Activated CD4-positive, alpha-beta memory T cell treated with anti-CD3 and anti-CD28 coated beads for 36 hours (primary cell): ENCODE measurements at regions of chr3 and their contacts with region 1.

Region 1: GRCh38 chr3:197327701-197328100 is 29.3 kb upstream of the DLG1 start:
- DNase-seq: no peak
- H3K4me3 Mint-ChIP-seq: no peak overlapping the region
- H3K27ac Mint-ChIP-seq: no peak overlapping the region
- H3K4me1 Mint-ChIP-seq: peaks cover 9% of the 10 kb centered on the region
- H3K27me3 Mint-ChIP-seq: peaks cover 28% of the 10 kb centered on the region

Region 2: GRCh38 chr3:197292083-197292646 is 35.5 kb before region 1 on chr3:
- CTCF ChIA-PET with region 1: no interaction called
- POLR2A ChIA-PET with region 1: no interaction called
- intact Hi-C with region 1: loop called (anchors 5 kb)
- DNase-seq: peak; percentile 35
- H3K4me3 Mint-ChIP-seq: no peak overlapping the region
- H3K27ac Mint-ChIP-seq: no peak overlapping the region
- H3K4me1 Mint-ChIP-seq: peaks cover 61% of the 10 kb centered on the region
- H3K27me3 Mint-ChIP-seq: no peaks in the 10 kb centered on the region

Region 3: GRCh38 chr3:197305854-197306253 is 21.8 kb before region 1 on chr3:
- CTCF ChIA-PET with region 1: interaction called, 4 read pairs
- POLR2A ChIA-PET with region 1: no interaction called
- intact Hi-C with region 1: loop called (anchors 1 kb)
- DNase-seq: peak; percentile 29
- H3K4me3 Mint-ChIP-seq: no peak overlapping the region
- H3K27ac Mint-ChIP-seq: no peak overlapping the region
- H3K4me1 Mint-ChIP-seq: peaks cover 28% of the 10 kb centered on the region
- H3K27me3 Mint-ChIP-seq: peaks cover 21% of the 10 kb centered on the region

Region 4: DNA sequence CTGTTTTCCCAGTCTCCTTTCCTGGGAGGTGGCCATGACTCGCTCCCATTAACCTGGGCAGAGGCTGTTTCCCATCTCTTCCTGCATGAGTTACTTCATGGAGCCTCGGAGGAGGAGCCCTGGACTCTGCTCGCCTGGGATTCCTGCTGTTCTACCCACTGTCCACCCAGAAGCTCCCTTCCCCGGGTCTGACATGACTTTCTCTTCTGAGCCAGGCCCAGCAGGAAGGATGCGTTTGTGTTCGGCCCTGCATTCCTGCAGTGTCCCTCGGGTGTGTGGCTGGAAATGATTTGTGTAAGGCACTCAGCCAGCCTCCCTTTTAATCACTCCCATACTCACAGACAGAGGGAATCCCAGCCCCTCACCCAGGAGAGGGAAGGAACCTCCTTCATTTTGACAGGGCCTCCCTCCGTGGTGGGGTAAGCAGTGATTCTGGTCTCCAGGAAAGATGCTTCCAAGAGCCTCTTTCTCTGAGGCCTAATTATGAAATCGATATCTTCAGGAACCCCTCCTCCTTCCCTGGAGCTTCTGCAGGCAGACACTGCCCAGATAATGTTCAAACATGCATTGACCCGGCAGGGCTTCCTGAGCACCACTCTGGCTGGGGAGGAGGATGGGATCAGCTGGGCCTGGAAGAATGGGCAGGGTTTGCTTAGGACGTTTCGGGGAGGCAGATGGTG is 12.3 kb after region 1 on chr3:
- CTCF ChIA-PET with region 1: no interaction called
- POLR2A ChIA-PET with region 1: no interaction called
- intact Hi-C with region 1: no loop called
- DNase-seq: no peak
- H3K4me3 Mint-ChIP-seq: no peak overlapping the region
- H3K27ac Mint-ChIP-seq: no peak overlapping the region
- H3K4me1 Mint-ChIP-seq: no peaks in the 10 kb centered on the region
- H3K27me3 Mint-ChIP-seq: peaks cover 3% of the 10 kb centered on the region